ENCODE measurements at regions of chr2 and their contacts with region 1.

Region 1: DNA sequence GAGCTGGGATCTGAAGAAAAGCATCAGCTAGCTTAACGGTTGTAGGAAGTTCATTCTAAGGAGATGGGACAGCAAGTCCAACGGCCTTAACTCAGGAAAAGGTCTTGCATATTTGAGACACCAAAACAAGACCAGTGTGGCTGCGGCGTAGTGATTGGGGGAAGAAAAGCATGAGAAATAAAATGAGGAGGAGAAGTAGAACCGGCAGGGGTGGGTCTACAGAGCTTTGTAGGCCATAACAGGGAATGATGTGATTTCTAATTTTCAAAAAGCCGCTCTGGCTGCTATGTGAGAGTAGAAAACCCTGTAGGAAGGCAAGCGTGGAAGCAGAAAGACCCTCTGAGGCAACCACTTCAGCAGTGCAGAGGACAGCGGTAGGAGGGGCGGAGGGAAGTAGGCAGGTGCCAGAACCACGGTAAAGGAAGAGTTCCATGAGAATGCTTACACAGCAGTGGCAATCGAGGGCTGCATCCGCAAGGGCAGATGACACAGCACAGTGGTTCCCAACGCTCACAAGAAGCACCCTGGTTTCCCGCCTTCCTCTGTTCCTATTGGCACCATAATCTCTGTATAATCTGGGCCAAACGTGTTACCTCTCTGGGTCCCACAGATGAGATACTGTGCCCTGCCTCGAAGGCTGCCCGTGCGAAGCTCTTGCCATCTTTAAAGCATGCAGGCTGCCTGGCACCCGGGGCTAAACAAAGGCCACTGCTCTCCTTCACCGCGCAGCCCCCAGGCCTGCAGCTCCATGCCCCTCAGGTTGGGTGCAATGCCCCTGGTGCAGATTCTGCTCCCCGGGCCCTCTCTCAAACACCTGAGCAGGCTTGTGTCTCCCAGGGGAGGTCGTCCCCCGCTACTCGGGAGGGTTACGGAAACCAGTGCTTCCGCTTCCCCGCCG is 791 bp downstream of the ANKRD39 start:
- DNase-seq: no peak
- H3K4me3 Mint-ChIP-seq: peak overlapping the region; percentile 98
- H3K27ac Mint-ChIP-seq: peak overlapping the region; percentile 47
- H3K4me1 Mint-ChIP-seq: peaks cover 11% of the 10 kb centered on the region
- H3K27me3 Mint-ChIP-seq: no peaks in the 10 kb centered on the region
- CTCF ChIP-seq: no peak

Region 2: GRCh38 chr2:96556441-96557330 is 300.3 kb before region 1 on chr2:
- CTCF ChIA-PET with region 1: no interaction called
- intact Hi-C with region 1: no loop called
- DNase-seq: peak; percentile 90
- H3K4me3 Mint-ChIP-seq: peak overlapping the region; percentile 62
- H3K27ac Mint-ChIP-seq: peak overlapping the region; percentile 98
- H3K4me1 Mint-ChIP-seq: peaks cover 34% of the 10 kb centered on the region
- H3K27me3 Mint-ChIP-seq: no peaks in the 10 kb centered on the region
- CTCF ChIP-seq: no peak

Region 3: GRCh38 chr2:96687266-96687665 is 169.8 kb before region 1 on chr2:
- CTCF ChIA-PET with region 1: no interaction called
- intact Hi-C with region 1: no loop called
- DNase-seq: no peak
- H3K4me3 Mint-ChIP-seq: no peak overlapping the region
- H3K27ac Mint-ChIP-seq: no peak overlapping the region
- H3K4me1 Mint-ChIP-seq: no peaks in the 10 kb centered on the region
- H3K27me3 Mint-ChIP-seq: peaks cover 14% of the 10 kb centered on the region
- CTCF ChIP-seq: no peak

Region 4: DNA sequence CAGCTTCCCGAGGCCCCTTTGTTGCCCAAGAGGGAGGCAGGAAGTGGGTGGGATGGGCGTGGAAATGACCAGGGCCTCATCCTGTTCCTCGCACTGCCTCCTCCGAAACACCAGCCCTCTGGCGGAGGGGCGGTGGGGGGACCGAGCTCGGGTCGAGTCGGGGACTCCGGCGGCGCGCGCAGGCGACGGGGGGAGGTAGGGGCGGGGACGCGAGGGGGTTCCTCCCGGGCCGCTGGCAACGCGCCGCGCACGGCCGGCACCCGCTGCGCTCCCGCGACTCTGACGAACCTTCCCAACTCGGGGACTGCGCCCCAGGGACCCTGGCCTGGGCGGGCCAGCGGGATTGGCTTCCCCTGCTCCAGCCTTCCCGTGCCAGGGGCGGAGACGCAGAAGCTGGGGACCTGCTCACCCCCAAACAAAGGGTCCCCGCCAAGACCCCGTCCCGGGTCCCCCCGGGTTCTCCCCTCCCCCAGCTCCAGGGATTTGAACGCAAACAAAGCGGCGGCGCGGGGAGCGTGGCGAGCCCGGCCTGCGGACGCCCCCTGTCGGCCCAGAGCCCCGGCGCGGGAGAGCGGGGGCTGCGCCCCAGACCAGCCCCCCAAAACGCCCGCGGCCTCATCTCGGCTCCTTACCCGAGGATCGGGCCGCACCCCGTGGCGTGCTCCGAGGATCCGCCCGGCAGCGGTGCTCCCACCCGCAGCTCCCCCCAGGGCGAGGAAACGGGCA is 11.7 kb after region 1 on chr2:
- CTCF ChIA-PET with region 1: interaction called, 23 read pairs
- intact Hi-C with region 1: no loop called
- DNase-seq: peak; percentile 85
- H3K4me3 Mint-ChIP-seq: peak overlapping the region; percentile 81
- H3K27ac Mint-ChIP-seq: peak overlapping the region; percentile 52
- H3K4me1 Mint-ChIP-seq: no peaks in the 10 kb centered on the region
- H3K27me3 Mint-ChIP-seq: no peaks in the 10 kb centered on the region
- CTCF ChIP-seq: peak; percentile 81

Region 5: GRCh38 chr2:96951093-96951654 is 94.1 kb after region 1 on chr2:
- CTCF ChIA-PET with region 1: interaction called, 39 read pairs
- intact Hi-C with region 1: loop called (anchors 1 kb)
- DNase-seq: peak; percentile 89
- H3K4me3 Mint-ChIP-seq: no peak overlapping the region
- H3K27ac Mint-ChIP-seq: no peak overlapping the region
- H3K4me1 Mint-ChIP-seq: no peaks in the 10 kb centered on the region
- H3K27me3 Mint-ChIP-seq: peaks cover 66% of the 10 kb centered on the region
- CTCF ChIP-seq: peak; percentile 91

Region 6: GRCh38 chr2:96960153-96960961 is 103.3 kb after region 1 on chr2:
- CTCF ChIA-PET with region 1: interaction called, 5 read pairs
- intact Hi-C with region 1: loop called (anchors 1 kb)
- DNase-seq: peak; percentile 92
- H3K4me3 Mint-ChIP-seq: no peak overlapping the region
- H3K27ac Mint-ChIP-seq: no peak overlapping the region
- H3K4me1 Mint-ChIP-seq: peaks cover 12% of the 10 kb centered on the region
- H3K27me3 Mint-ChIP-seq: peaks cover 20% of the 10 kb centered on the region
- CTCF ChIP-seq: peak; percentile 88

Measured in Calu3 (cell line).